ENCODE measurements at regions of chr1 and their contacts with region 1.

Region 1: DNA sequence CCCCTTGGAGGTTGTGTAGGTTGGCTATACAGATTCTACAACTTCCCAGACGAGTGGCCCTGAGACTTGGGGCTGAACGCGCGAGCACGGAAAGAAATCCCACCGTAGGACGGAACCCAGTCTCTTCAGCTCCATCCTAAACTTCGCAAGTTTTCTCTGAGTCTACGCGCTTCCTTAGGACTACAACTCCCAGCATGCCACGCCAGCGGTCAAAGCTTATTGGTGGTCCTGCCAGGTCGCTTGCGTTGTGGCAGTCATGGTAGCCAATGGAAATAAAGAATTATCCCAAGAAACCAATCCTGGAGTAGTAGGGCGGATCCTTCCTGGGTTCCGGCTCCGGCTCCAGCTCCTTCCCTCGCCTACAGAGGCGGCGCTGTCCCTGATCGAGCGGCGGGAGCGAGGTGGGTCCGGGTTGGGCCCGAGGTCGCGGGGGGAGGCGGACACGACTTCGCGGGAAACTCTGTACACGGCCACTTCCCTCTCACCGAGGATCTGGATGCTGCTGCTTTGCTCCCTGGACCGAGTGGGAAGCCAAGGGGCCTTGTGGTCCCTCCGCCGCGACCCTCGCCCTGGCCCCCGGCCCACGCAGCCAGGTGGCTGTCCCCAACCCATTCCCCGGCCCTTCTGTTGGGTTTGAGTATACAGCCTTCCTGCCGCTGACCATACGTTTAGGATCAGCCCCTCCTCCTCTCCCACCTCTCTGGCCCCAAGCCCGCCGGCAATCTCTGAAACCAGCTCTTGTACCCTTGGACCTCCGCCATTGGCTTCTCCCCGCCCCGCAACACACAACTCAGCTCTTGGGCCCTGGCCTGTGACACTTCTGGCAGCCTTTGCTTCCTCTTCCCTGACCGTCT is at the start of gene ZNF691:
- DNase-seq: peak; percentile 95
- ATAC-seq: peak; percentile 96
- H3K4me3 Mint-ChIP-seq: peak within 1 kb of the TSS; percentile 92
- H3K27ac Mint-ChIP-seq: peak within 1 kb of the TSS; percentile 84
- H3K4me1 Mint-ChIP-seq: peaks cover 28% of the 10 kb centered on the region
- H3K27me3 Mint-ChIP-seq: no peaks in the 10 kb centered on the region
- CTCF ChIP-seq: peak; percentile 25
- total RNA-seq, gene ZNF691: 6.9 to 7.5 TPM

Region 2: GRCh38 chr1:42777852-42778251 is 68.6 kb before region 1 on chr1:
- CTCF ChIA-PET with region 1: interaction called, 13 read pairs
- POLR2A ChIA-PET with region 1: no interaction called
- intact Hi-C with region 1: no loop called
- DNase-seq: peak; percentile 56
- ATAC-seq: peak; percentile 82
- H3K4me3 Mint-ChIP-seq: no peak overlapping the region
- H3K27ac Mint-ChIP-seq: no peak overlapping the region
- H3K4me1 Mint-ChIP-seq: peaks cover 28% of the 10 kb centered on the region
- H3K27me3 Mint-ChIP-seq: no peaks in the 10 kb centered on the region
- CTCF ChIP-seq: peak; percentile 76

Region 3: GRCh38 chr1:42816585-42817434 is 29.7 kb before region 1 on chr1 and contains the starts of genes ERMAP and SVBP:
- CTCF ChIA-PET with region 1: interaction called, 10 read pairs
- POLR2A ChIA-PET with region 1: interaction called, 10 read pairs
- intact Hi-C with region 1: no loop called
- DNase-seq: peak; percentile 93
- ATAC-seq: peak; percentile 91
- H3K4me3 Mint-ChIP-seq: peak within 1 kb of the TSS; percentile 71
- H3K27ac Mint-ChIP-seq: peak within 1 kb of the TSS; percentile 90
- H3K4me1 Mint-ChIP-seq: peaks cover 23% of the 10 kb centered on the region
- H3K27me3 Mint-ChIP-seq: no peaks in the 10 kb centered on the region
- CTCF ChIP-seq: no peak
- total RNA-seq, gene ERMAP: 3.9 to 4.4 TPM
- total RNA-seq, gene SVBP: 12.2 to 14.3 TPM

Region 4: DNA sequence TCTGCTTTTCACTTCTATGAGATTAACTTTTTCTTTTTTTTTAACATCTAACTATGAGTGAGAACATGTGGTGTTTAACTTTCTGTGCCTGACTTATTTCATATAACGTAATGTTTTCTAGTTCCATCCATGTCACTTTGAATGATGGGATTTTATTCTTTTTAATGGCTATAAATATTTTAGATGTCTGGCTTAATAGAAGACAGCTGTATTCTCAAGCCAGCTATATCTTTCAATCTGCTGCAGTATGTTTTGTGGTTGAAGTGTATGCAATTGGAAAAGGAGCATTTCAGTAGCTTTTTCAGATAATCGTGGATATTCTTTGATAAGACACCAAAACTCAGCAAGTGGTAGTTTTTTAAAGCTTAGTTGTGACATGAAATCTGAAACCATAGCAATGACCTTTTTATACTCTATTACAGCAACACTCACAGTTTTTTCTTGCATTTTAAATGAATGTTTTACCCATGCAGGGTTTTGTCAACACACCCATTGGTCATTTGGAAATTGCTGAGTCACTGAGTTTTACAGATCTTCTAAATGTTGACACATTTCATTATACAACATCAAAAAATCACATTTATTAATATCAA is 23.6 kb before region 1 on chr1:
- CTCF ChIA-PET with region 1: interaction called, 10 read pairs
- POLR2A ChIA-PET with region 1: interaction called, 10 read pairs
- intact Hi-C with region 1: no loop called
- DNase-seq: no peak
- ATAC-seq: no peak
- H3K4me3 Mint-ChIP-seq: no peak overlapping the region
- H3K27ac Mint-ChIP-seq: no peak overlapping the region
- H3K4me1 Mint-ChIP-seq: peaks cover 16% of the 10 kb centered on the region
- H3K27me3 Mint-ChIP-seq: no peaks in the 10 kb centered on the region
- CTCF ChIP-seq: no peak

Measured in activated CD8-positive, alpha-beta T cell treated with anti-CD3 and anti-CD28 coated beads for 36 hours (primary cell).